ENCODE measurements at regions of chr5 and their contacts with region 1.

Region 1: DNA sequence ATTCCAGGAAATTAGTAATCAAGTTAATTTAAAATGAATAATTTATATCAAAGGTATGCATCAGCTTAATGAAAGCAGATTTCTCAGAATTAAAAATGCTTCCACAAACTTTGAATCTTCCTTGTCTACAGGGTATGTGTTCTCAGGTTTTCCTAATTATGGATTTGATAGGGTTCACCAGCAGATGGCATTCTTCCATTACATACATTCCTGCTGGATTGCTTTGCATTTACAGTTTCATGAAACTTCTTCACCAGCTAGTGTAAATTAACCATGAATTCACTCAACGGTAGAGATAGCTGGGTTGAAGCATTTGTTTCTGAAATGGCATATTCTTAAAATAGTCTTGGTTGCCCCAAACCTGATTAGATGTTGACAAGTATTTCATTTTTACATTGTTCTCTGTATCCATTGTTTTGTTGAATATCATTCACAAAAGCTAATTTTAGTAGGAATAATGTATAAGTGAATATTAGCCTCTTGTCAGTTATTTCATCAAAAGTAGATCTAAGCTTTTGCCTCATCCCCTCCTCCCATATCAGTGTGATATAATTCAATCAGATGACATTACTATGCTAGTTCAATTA is 68.7 kb upstream of the WDR41 start:
- DNase-seq: peak in 9 of 42 donors; percentile 13 to 52 (median 18)

Region 2: GRCh38 chr5:77806213-77806843 is 245.6 kb after region 1 on chr5:
- intact Hi-C with region 1: no loop called
- DNase-seq: no peak

Region 3: DNA sequence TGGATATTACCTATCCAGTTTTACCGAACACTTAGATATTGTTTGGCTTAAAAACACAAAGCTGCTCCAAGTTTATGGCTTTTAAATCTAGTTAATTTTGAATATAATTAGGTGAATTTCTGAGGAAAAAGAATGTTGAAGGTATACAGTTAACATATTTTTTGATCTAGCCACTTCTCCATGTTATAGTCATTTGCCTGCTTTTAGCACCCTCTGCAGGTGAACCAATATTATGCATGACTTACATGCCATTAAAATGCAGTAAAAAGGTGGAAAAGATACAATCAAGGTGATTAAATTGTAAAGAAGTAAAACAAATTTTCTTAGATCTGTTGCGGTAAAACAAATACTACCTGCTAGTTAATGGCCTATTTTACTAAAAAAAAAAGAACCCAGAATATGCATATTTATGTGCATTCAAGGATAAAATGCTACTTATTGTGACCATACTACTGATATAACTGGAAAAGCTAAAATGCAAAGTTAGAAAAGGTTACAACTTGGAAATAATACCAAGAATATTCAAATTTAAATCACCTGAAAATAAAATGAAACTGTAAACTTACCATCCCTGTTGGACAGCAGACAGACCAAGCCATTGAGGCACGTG is 601.6 kb after region 1 on chr5:
- intact Hi-C with region 1: loop called (anchors 10 kb)
- DNase-seq: peak in 10 of 42 donors; percentile 14 to 53 (median 33)